ENCODE measurements at regions of chr22 and their contacts with region 1.

Region 1: DNA sequence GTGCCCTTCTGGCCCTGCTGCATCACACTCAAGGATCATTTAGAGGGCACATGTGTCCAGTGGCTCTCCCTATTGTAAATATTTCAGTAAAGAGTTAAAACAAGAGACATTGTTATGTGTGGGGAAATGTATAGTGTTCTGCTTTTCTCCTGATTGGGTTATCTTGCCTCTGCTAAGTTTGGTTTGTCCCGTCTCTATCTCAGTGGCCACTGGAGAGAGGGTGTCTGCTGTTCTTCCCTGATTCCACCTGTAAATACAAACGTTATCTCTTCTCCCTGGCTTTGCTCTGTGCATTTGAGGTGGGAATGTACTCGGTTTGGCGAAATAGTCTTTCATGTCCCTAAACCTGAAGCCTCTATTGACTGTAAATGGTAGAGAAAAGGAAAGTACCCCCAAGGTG is 6.3 kb downstream of the MIEF1 start:
- DNase-seq: no peak
- H3K4me3 ChIP-seq: no peak overlapping the region
- CTCF ChIP-seq: no peak

Region 2: DNA sequence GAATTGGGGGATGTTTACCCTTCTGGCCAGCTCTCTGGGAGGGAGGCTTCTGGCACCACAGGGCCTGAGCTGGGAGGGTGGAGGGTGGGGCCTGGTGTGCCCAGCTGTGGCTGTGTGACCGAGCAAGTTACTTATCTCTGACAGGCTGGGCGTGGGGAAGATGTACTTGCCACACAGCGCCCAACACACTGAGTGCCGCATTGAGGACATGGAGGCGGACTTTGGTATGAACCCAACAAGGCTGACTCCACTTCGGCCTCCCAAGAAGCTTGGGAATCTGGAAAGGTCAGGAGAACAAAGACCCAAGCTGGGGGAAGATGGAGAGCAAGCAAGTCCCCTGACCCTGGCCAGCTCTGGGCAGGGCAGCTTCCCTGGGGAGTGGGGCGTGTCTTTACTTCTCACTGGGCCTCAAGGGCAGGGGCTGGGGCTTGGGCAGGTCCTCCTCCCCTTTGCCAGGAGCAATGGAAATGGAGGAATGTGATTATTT is 54.0 kb before region 1 on chr22:
- in situ Hi-C with region 1: loop called (anchors 5 kb)
- DNase-seq: no peak
- H3K4me3 ChIP-seq: no peak overlapping the region
- CTCF ChIP-seq: no peak

Region 3: GRCh38 chr22:39598017-39598965 is 89.9 kb after region 1 on chr22:
- in situ Hi-C with region 1: no loop called
- DNase-seq: no peak
- H3K4me3 ChIP-seq: no peak overlapping the region
- CTCF ChIP-seq: no peak

Region 4: DNA sequence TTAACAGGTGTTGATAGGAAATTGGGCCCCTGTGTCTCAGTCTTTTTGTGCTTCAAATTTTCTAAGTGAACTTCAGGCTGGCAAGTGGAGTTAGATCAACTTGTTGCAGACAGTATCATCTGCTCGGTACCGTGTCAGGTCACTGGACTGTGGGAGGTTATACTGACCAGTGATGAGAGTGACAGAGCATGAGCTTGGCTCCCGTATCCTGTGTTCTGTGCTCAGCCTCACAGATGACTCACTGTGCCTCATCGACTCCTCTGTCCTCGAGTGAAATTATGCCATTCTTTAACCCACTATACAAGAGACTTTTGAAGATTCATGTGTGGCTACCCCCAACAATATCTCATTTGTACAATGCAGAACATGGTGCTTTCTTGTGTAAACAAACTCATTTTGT is 400.3 kb after region 1 on chr22:
- in situ Hi-C with region 1: no loop called
- DNase-seq: no peak
- H3K4me3 ChIP-seq: no peak overlapping the region
- CTCF ChIP-seq: no peak

Measured in astrocyte of the cerebellum (primary cell).